MCF 10A (cell line): ENCODE measurements at regions of chr3 and their contacts with region 1.

Region 1: GRCh38 chr3:64030741-64031140 is 7.4 kb upstream of the PSMD6 start:
- DNase-seq: peak; percentile 75
- H3K4me3 Mint-ChIP-seq: peak overlapping the region; percentile 65
- H3K27ac Mint-ChIP-seq: no peak overlapping the region
- H3K4me1 Mint-ChIP-seq: peaks cover 8% of the 10 kb centered on the region
- H3K27me3 Mint-ChIP-seq: peaks cover 30% of the 10 kb centered on the region
- CTCF ChIP-seq: peak; percentile 86

Region 2: GRCh38 chr3:64093825-64094712 is 63.3 kb after region 1 on chr3:
- CTCF ChIA-PET with region 1: no interaction called
- POLR2A ChIA-PET with region 1: no interaction called
- intact Hi-C with region 1: no loop called
- DNase-seq: no peak
- H3K4me3 Mint-ChIP-seq: no peak overlapping the region
- H3K27ac Mint-ChIP-seq: no peak overlapping the region
- H3K4me1 Mint-ChIP-seq: no peaks in the 10 kb centered on the region
- H3K27me3 Mint-ChIP-seq: no peaks in the 10 kb centered on the region
- CTCF ChIP-seq: no peak

Region 3: GRCh38 chr3:64187065-64187959 is 156.6 kb after region 1 on chr3:
- CTCF ChIA-PET with region 1: interaction called, 11 read pairs
- POLR2A ChIA-PET with region 1: no interaction called
- intact Hi-C with region 1: no loop called
- DNase-seq: peak; percentile 93
- H3K4me3 Mint-ChIP-seq: peak overlapping the region; percentile 62
- H3K27ac Mint-ChIP-seq: peak overlapping the region; percentile 83
- H3K4me1 Mint-ChIP-seq: peaks cover 66% of the 10 kb centered on the region
- H3K27me3 Mint-ChIP-seq: no peaks in the 10 kb centered on the region
- CTCF ChIP-seq: no peak

Region 4: DNA sequence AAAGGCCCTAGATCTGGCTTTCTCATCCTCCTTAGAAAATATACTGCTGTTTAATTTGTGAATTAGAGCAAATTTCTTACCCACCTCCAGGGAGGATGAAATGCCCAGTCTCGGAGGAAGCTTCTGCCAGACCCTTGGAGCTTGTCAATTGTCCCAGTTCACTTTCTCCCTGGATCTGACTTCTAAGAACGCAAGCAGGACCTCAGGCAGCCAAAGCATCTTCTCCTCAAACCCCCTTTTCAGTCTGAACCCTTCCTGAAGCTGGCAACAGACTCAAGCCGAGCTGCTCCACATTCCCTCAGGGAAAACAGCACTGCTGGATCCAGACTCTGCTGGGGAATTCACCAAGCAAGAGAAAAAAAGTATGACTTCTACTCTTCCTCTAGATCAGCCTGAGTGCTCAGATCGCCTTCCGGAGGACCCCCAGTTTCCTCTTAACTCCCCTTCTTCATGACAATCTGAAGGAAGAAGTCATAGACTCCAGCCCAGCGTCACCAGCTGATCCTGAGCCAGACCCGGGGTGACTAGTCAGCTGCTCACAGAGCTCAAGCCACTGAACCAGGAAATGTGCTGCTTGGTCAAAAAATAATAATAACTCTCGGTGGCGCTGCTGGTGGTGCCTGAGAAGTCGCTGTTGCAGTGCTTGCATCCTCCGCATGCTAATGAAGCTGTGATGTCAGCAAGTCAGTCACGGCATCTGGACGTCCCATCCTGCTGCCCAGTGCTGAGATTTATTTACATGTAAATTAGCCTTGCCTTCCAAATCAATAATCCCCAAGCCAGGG is 194.3 kb after region 1 on chr3 and contains the start of gene PRICKLE2:
- CTCF ChIA-PET with region 1: no interaction called
- POLR2A ChIA-PET with region 1: no interaction called
- intact Hi-C with region 1: loop called (anchors 1 kb)
- DNase-seq: no peak
- H3K4me3 Mint-ChIP-seq: peak within 1 kb of the TSS; percentile 6
- H3K27ac Mint-ChIP-seq: peak within 1 kb of the TSS; percentile 7
- H3K4me1 Mint-ChIP-seq: peaks cover 11% of the 10 kb centered on the region
- H3K27me3 Mint-ChIP-seq: no peaks in the 10 kb centered on the region
- CTCF ChIP-seq: no peak
- total RNA-seq, gene PRICKLE2: 9.6 and 11.4 TPM in 2 replicates

Region 5: DNA sequence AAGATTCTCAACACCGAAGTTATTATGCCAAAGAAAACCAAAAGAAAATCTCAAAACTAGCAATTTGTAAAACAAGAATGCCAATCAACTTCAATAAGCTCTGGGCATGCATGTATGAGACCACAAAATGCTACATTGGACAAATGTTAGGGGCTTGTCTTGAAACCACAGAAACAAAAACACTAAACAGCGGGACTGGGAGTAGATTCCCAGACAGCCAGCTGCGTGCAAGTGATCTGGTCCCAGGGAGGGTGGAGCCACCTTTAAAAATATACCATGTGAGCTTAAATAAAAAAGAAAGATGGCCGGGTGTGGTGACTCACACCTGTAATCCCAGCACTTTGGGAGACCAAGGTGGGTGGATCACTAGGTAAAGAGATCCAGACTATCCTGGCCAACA is 358.1 kb after region 1 on chr3:
- CTCF ChIA-PET with region 1: interaction called, 10 read pairs
- POLR2A ChIA-PET with region 1: no interaction called
- intact Hi-C with region 1: no loop called
- DNase-seq: no peak
- H3K4me3 Mint-ChIP-seq: no peak overlapping the region
- H3K27ac Mint-ChIP-seq: no peak overlapping the region
- H3K4me1 Mint-ChIP-seq: no peaks in the 10 kb centered on the region
- H3K27me3 Mint-ChIP-seq: no peaks in the 10 kb centered on the region
- CTCF ChIP-seq: no peak